Activated CD4-positive, alpha-beta T cell treated with anti-CD3 and anti-CD28 coated beads, Interleukin-2, amount 10 ng/mL, durations not matched to agents 24 days and 14 days (primary cell): ENCODE measurements at regions of chr5 and their contacts with region 1.

Region 1: DNA sequence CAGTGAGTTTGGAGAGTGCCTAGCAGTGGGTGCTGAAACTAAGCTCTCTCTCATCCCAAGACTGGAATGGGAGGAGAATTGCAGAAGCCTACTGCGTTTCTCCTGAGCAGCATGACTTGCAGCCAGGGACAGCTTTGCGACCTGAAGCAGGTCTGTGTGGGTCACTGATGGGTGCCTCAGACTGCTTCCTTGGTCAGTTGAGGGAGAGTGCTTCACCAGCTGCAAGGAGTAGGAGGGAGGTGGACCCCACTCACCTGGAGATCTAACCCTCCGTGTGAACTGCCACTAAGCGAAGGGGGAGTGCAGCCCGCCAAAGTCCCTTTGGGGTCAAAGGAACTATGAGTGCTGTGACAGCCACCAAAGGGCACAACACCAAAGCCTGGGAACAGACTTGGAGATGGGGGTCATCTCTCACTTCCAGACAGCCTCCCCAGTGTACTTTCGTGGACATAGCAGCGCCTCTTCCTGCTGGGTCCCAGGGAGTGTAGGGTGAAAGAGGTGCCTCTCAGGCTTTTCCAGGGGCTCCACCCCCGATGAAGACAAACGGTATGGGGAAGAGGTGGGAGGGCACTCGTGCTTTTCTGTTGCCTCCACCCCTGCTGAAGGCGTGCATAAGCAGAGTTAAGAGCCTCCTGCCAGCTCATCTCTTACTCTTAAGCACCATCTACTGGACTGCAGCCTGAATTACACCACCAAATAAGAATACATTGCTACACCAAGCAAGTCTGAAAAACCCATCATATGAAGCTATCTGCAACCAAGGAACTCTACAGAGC is 34.3 kb upstream of the MACIR start:
- DNase-seq: peak; percentile 87
- H3K4me3 Mint-ChIP-seq: no peak overlapping the region
- H3K27ac Mint-ChIP-seq: no peak overlapping the region
- H3K4me1 Mint-ChIP-seq: peaks cover 2% of the 10 kb centered on the region
- H3K27me3 Mint-ChIP-seq: peaks cover 38% of the 10 kb centered on the region

Region 2: DNA sequence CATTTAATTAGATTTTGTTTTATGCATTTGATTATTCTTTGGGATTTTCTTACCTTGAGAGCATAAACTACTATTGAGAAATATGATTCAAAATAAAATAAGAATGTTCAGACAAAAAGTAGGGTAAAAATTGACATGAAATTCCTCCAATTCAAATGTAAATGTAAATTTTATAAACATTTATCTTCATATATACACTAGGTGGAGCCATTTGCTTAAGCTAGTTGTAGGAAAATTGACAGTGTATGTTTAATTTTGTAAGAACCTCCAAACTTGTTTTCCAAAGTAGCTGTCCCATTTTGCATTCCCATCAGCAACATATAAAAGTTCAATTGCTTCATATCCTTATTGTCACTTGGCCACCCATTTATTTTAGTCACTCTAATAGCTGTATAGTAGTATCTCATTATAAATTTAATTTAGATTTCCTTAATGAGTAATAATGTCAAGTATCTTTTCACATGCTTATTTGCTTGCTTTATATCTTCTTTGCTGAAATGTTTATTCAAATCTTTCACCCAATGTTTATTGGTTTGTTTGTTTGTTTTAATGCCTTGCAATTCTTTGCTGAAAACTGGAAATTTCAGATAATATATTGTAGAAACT is 687.9 kb before region 1 on chr5:
- intact Hi-C with region 1: loop called (anchors 1 kb)
- DNase-seq: no peak
- H3K4me3 Mint-ChIP-seq: no peak overlapping the region
- H3K27ac Mint-ChIP-seq: no peak overlapping the region
- H3K4me1 Mint-ChIP-seq: no peaks in the 10 kb centered on the region
- H3K27me3 Mint-ChIP-seq: peaks cover 7% of the 10 kb centered on the region